ENCODE measurements at regions of chr9 and their contacts with region 1.

Region 1: GRCh38 chr9:130712564-130713285 is 19.1 kb downstream of the EXOSC2 start:
- DNase-seq: peak; percentile 99
- ATAC-seq: peak; percentile 97 to 98

Region 2: DNA sequence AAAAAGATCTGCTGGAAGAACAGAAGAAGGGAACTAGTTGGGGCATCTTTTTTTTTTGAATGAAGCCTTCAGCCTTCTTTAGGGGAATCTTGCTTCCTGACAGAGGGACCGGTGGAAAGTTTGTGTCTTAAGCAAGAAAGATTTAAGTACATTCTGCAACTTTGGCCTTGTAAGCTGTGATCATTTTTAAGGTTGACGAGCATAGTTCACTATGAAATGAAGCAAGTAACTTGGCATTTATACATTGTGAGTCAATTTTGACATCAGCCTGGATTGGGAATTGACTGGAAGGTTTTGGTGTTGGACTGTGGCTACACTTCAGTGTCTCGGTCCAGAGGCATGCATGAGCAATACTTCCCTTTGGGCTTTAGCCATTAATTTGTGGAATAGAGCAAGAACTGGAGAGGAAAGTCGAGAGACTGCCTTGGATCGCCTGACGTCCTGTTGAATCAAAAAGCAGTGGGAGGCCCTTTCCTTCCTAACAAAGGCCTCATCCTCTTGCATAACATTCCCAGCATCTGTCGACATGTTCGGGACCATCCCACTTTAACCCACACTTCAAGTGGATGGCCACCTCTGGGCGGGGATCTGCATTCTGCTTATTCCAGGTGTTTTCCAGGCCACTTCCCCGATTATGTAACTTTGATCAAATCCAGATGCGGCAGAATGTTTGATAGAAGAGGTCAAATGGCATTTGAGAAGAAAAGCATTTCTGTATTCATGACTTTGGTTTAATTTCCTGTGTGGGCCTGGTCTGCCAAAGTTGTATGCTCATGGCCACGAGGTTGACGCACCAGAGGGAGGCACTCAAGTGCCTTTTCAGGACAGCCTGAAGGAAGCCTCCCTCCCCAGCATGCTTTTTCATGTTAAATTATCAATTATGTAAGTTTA is 134.8 kb after region 1 on chr9:
- intact Hi-C with region 1: loop called in 1 of 2 experiments (anchors 5 kb)
- DNase-seq: peak; percentile 84
- ATAC-seq: peak; percentile 89 to 90

Measured in left cardiac atrium (tissue), 4 donors.